Activated CD8-positive, alpha-beta T cell treated with anti-CD3 and anti-CD28 coated beads, Interleukin-2, amount 10 ng/mL, durations not matched to agents 7 days and 5 days (primary cell): ENCODE measurements at regions of chr17 and their contacts with region 1.

Region 1: DNA sequence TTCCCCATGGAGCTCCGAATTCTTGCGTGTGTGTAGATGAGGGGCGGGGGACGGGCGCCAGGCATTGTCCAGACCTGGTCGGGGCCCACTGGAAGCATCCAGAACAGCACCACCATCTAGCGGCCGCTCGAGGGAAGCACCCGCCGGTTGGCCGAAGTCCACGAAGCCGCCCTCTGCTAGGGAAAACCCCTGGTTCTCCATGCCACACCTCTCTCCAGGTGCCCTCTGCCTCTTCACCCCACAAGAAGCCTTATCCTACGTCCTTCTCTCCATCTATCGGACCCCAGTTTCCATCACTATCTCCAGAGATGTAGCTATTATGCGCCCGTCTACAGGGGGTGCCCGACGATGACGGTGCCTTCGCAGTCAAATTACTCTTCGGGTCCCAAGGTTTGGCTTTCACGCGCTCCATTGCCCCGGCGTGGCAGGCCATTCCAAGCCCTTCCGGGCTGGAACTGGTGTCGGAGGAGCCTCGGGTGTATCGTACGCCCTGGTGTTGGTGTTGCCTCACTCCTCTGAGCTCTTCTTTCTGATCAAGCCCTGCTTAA is 617 bp upstream of the SENP3 start:
- DNase-seq: peak; percentile 91
- ATAC-seq: peak; percentile 74
- H3K4me3 Mint-ChIP-seq: peak overlapping the region; percentile 77
- H3K27ac Mint-ChIP-seq: peak overlapping the region; percentile 87
- H3K4me1 Mint-ChIP-seq: peaks cover 63% of the 10 kb centered on the region
- H3K27me3 Mint-ChIP-seq: no peaks in the 10 kb centered on the region

Region 2: GRCh38 chr17:7351665-7352501 is 209.2 kb before region 1 on chr17 and contains the start of gene KCTD11:
- CTCF ChIA-PET with region 1: interaction called, 40 read pairs
- POLR2A ChIA-PET with region 1: interaction called, 3 read pairs
- DNase-seq: peak; percentile 87
- ATAC-seq: peak; percentile 63
- H3K4me3 Mint-ChIP-seq: peak within 1 kb of the TSS; percentile 76
- H3K27ac Mint-ChIP-seq: peak within 1 kb of the TSS; percentile 81
- H3K4me1 Mint-ChIP-seq: peaks cover 80% of the 10 kb centered on the region
- H3K27me3 Mint-ChIP-seq: no peaks in the 10 kb centered on the region
- total RNA-seq, gene KCTD11: 11.4 to 11.8 TPM

Region 3: DNA sequence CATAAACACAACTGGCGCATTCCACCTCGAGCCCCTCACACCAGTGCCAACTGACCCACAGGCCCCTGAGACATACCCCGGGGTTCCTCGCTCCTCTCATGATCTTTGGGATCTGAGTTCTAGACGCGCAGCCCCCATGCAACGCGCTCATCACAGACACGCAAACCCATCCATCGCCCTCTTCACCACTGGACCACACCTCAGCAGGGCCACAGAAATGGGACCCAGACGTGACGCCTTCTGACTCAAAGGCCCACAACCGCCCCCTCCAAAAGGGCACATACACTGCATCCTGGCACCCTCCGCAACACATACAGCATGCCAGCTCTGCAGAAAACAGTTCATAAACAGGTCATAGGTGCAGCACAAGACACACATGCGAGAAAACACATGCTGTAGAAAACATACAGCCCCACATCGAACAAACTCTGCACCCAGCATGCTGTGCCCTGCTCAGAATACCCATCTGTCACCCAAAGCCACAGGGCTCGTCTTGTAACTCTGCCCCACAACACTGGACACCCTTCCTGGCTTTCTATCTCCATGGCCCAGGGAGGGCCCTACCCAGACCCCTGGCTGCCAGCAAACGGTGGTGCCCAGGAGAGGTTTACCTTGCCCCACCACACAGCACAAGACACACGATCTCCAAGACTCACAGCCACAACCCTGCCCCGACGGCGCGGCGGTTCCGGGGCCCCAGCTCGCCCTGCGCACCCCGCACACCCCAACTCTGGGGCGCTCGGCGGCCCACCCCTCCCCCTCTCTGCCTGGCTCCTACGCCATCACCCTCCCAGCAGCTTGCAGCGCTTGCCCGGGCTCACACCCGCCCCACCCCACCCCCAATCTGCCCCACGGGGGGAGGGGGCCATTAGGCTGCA is 82.6 kb before region 1 on chr17:
- CTCF ChIA-PET with region 1: interaction called, 18 read pairs
- POLR2A ChIA-PET with region 1: interaction called, 30 read pairs
- DNase-seq: peak; percentile 74
- ATAC-seq: peak; percentile 37
- H3K4me3 Mint-ChIP-seq: peak overlapping the region; percentile 94
- H3K27ac Mint-ChIP-seq: peak overlapping the region; percentile 90
- H3K4me1 Mint-ChIP-seq: peaks cover 71% of the 10 kb centered on the region
- H3K27me3 Mint-ChIP-seq: no peaks in the 10 kb centered on the region

Region 4: GRCh38 chr17:7509937-7510336 is 51.2 kb before region 1 on chr17:
- CTCF ChIA-PET with region 1: interaction called, 264 read pairs
- POLR2A ChIA-PET with region 1: interaction called, 32 read pairs
- DNase-seq: no peak
- ATAC-seq: no peak
- H3K4me3 Mint-ChIP-seq: no peak overlapping the region
- H3K27ac Mint-ChIP-seq: no peak overlapping the region
- H3K4me1 Mint-ChIP-seq: peaks cover 4% of the 10 kb centered on the region
- H3K27me3 Mint-ChIP-seq: no peaks in the 10 kb centered on the region

Region 5: DNA sequence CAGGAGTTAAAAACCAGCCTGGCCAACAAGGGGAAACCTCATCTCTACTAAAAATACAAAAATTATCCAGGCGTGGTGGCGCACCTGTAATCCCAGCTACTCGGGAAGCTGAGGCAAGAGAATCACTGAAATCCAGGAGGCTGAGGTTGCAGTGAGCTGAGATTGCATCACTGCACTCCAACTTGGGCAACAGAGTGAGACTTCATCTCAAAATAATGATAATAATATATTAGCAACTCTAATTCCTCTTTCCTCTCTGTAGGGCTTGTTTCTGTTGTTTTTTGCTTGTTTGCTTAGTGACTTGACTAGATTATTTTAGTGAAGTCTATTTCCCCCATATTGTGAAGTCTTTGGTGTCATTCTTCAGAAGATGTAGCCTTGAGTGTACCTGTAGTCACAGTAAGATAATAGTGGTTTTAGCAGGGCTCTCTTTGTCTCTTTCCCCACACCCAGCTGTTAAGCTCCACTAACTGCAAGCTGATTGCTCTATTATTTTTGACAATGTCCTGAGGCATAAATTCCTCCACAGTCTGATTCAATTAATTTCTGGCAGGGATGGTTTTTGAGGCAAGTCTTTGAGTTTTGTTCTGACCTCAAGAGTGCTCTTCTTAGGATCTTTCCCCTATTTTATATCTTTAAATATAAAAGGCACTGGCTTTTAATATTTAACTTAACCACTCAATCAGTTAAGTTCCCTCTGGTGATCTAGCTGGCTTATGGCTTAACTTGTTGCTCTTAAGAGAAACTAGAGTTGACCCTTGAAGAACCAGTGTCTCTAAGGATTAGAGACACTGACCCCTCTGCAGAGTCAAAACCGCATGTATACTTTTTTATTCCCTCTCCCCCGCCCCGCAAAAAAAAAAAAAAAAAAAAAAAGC is 30.8 kb before region 1 on chr17:
- CTCF ChIA-PET with region 1: interaction called, 53 read pairs
- POLR2A ChIA-PET with region 1: no interaction called
- DNase-seq: no peak
- ATAC-seq: no peak
- H3K4me3 Mint-ChIP-seq: no peak overlapping the region
- H3K27ac Mint-ChIP-seq: no peak overlapping the region
- H3K4me1 Mint-ChIP-seq: no peaks in the 10 kb centered on the region
- H3K27me3 Mint-ChIP-seq: peaks cover 6% of the 10 kb centered on the region

Region 6: GRCh38 chr17:7583253-7584109 is 22.4 kb after region 1 on chr17 and contains the start of gene MPDU1:
- CTCF ChIA-PET with region 1: interaction called, 35 read pairs
- POLR2A ChIA-PET with region 1: interaction called, 13 read pairs
- DNase-seq: peak; percentile 97
- ATAC-seq: peak; percentile 82
- H3K4me3 Mint-ChIP-seq: peak within 1 kb of the TSS; percentile 98
- H3K27ac Mint-ChIP-seq: peak within 1 kb of the TSS; percentile 100
- H3K4me1 Mint-ChIP-seq: peaks cover 69% of the 10 kb centered on the region
- H3K27me3 Mint-ChIP-seq: no peaks in the 10 kb centered on the region
- total RNA-seq, gene MPDU1: 69.0 to 70.4 TPM

Region 7: DNA sequence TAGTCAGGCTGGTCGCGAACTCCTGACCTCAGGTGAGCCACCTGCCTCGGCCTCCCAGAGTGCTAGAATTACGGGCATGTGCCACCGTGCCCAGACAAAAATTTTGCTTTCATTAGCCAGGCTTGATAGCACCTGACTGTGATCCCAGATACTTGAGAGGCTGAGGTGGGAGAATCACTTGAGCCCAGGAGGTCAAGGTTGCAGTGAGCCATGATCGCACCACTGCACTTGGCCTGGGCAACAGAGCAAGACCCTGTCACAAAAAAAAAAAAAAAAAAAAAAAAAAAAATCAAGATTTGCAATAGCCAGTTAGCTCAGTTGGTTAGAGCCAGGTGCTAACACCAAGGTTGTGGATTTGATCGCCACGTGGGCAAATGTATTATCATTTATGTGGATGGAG is 59.7 kb after region 1 on chr17:
- CTCF ChIA-PET with region 1: no interaction called
- POLR2A ChIA-PET with region 1: no interaction called
- DNase-seq: no peak
- ATAC-seq: no peak
- H3K4me3 Mint-ChIP-seq: no peak overlapping the region
- H3K27ac Mint-ChIP-seq: no peak overlapping the region
- H3K4me1 Mint-ChIP-seq: no peaks in the 10 kb centered on the region
- H3K27me3 Mint-ChIP-seq: peaks cover 2% of the 10 kb centered on the region